A549 (cell line): ENCODE measurements at regions of chr11 and their contacts with region 1.

Region 1: GRCh38 chr11:73307323-73308002 is 613 bp upstream of the ARHGEF17 start:
- DNase-seq: peak; percentile 98
- ATAC-seq: peak; percentile 67 to 77
- H3K4me3 ChIP-seq: peak overlapping the region; percentile 72
- H3K27ac ChIP-seq: peak overlapping the region; percentile 85 to 91
- H3K4me1 ChIP-seq: peaks cover 25% of the 10 kb centered on the region
- CTCF ChIP-seq: peak; percentile 92
- EP300 ChIP-seq: no peak
- POLR2A ChIP-seq: peak; percentile 59; the same call in 1 of the 2 replicates
- RAD21 ChIP-seq: peak; percentile 90 to 94

Region 2: GRCh38 chr11:73280651-73281071 is 26.8 kb before region 1 on chr11:
- CTCF ChIA-PET with region 1: interaction called, 10 read pairs
- POLR2A ChIA-PET with region 1: interaction called, 3 read pairs
- DNase-seq: no peak
- ATAC-seq: no peak
- H3K4me3 ChIP-seq: no peak overlapping the region
- H3K27ac ChIP-seq: no peak overlapping the region
- H3K4me1 ChIP-seq: peaks cover 5% of the 10 kb centered on the region; the same call in 1 of the 3 replicates
- CTCF ChIP-seq: no peak
- EP300 ChIP-seq: no peak
- POLR2A ChIP-seq: no peak
- RAD21 ChIP-seq: no peak

Region 3: DNA sequence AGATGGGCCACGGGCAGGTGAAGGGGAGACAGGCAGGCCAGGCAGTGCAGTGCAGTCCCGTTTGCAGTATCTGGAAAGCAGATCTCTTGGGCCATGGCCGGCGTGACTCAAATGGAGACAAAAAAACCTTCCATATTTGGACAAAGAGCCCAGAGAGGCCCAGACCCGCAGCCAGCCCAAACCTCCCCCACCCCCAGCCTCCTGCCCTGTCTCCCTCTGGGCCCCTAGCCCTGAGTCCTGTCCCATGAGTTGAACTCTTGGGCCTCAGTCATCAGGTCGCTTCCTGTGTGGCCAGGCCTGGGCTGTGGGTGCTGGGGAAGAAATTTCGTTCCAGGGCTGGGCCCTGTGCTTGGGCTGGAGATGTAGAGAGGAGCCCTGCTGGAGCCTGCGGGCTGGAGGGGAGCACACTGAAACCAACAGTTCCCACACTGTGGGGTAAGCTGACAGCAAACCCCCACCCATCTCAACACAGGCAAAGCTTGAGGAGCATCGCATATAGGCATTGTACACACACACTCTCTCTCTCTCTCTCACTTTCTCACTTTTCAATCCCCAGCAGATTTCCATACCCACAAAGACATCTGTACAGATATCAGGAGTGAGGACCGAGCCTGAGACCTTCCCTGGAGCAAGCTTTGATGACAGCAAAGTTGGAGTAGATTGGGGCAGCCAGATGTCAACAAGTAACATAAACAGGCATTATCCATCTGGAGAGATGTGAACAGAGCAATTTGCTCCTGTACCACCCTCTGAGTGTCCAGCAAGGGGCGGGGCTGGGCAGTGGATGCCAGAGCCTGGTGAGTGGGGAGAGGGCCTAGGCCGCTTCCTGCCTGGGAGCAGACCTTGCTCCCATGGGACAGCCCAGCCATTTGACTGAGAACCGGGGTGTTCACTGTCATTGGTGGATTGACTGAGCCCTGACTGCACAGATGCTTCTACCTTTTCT is 17.8 kb after region 1 on chr11:
- CTCF ChIA-PET with region 1: interaction called, 205 read pairs
- POLR2A ChIA-PET with region 1: interaction called, 9 read pairs
- DNase-seq: no peak
- ATAC-seq: no peak
- H3K4me3 ChIP-seq: no peak overlapping the region
- H3K27ac ChIP-seq: no peak overlapping the region
- H3K4me1 ChIP-seq: peaks cover 9% of the 10 kb centered on the region; the same call in 2 of the 3 replicates
- CTCF ChIP-seq: no peak
- EP300 ChIP-seq: no peak
- POLR2A ChIP-seq: no peak
- RAD21 ChIP-seq: no peak

Region 4: DNA sequence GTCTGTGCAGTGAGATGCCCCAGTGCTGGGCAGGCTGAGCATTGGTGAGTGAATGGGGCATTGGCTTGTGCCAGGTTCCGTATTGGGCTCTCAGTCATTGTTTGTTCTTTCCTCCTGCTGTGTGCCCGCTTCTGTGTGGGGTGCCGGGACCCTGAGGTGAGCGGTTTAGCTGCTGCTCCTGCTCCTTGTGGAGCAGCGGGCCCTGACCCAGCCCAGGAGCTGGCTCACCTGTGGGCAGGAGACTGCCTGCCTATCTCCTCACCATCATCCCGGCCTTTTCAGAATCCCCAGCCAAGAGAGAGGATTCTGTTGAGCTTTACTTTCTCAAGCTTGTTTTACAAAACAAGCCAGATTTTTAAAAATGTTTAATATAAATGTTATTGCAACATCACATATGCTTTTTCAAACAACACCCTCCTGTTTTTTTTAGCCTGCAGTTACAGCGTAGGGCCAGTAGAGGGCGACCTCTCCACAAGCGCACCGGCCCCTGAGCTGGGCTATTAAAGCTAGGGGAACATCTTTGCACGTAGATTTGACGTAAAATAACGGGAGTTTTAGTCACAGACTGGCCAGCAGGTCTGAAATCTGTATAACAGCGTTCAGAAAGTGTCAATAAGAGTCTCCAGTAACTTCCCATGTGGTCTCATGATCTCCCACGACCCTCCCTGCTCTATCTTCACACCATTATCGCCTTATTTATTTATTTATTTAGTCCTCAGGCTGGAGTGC is 43.6 kb after region 1 on chr11:
- CTCF ChIA-PET with region 1: interaction called, 101 read pairs
- POLR2A ChIA-PET with region 1: interaction called, 9 read pairs
- DNase-seq: peak; percentile 73 to 92
- ATAC-seq: peak; percentile 47 to 80; a peak in 5 of 6 replicates
- H3K4me3 ChIP-seq: no peak overlapping the region
- H3K27ac ChIP-seq: no peak overlapping the region
- H3K4me1 ChIP-seq: no peaks in the 10 kb centered on the region
- CTCF ChIP-seq: peak; percentile 94
- EP300 ChIP-seq: no peak
- POLR2A ChIP-seq: no peak
- RAD21 ChIP-seq: peak; percentile 72 to 73

Region 5: GRCh38 chr11:73376160-73376802 is 68.8 kb after region 1 on chr11 and contains the start of gene RELT:
- CTCF ChIA-PET with region 1: interaction called, 16 read pairs
- POLR2A ChIA-PET with region 1: interaction called, 9 read pairs
- DNase-seq: peak; percentile 89 to 91
- ATAC-seq: peak; percentile 83 to 84
- H3K4me3 ChIP-seq: peak within 1 kb of the TSS; percentile 59
- H3K27ac ChIP-seq: peak within 1 kb of the TSS; percentile 75 to 93
- H3K4me1 ChIP-seq: peaks cover 23% of the 10 kb centered on the region
- CTCF ChIP-seq: peak; percentile 73
- EP300 ChIP-seq: no peak
- POLR2A ChIP-seq: peak; percentile 98
- RAD21 ChIP-seq: peak; percentile 38 to 44; a peak in 3 of 5 replicates
- polyA plus RNA-seq, gene RELT: 2.9 TPM in 2 replicates

Region 6: GRCh38 chr11:73393479-73394380 is 86.3 kb after region 1 on chr11:
- CTCF ChIA-PET with region 1: interaction called, 42 read pairs
- POLR2A ChIA-PET with region 1: interaction called, 20 read pairs
- DNase-seq: peak; percentile 83 to 90
- ATAC-seq: peak; percentile 69 to 86
- H3K4me3 ChIP-seq: no peak overlapping the region
- H3K27ac ChIP-seq: no peak overlapping the region
- H3K4me1 ChIP-seq: peaks cover 21% of the 10 kb centered on the region
- CTCF ChIP-seq: peak; percentile 84
- EP300 ChIP-seq: no peak
- POLR2A ChIP-seq: no peak
- RAD21 ChIP-seq: peak; percentile 89 to 94